ENCODE measurements at regions of chr10 and their contacts with region 1.

Region 1: DNA sequence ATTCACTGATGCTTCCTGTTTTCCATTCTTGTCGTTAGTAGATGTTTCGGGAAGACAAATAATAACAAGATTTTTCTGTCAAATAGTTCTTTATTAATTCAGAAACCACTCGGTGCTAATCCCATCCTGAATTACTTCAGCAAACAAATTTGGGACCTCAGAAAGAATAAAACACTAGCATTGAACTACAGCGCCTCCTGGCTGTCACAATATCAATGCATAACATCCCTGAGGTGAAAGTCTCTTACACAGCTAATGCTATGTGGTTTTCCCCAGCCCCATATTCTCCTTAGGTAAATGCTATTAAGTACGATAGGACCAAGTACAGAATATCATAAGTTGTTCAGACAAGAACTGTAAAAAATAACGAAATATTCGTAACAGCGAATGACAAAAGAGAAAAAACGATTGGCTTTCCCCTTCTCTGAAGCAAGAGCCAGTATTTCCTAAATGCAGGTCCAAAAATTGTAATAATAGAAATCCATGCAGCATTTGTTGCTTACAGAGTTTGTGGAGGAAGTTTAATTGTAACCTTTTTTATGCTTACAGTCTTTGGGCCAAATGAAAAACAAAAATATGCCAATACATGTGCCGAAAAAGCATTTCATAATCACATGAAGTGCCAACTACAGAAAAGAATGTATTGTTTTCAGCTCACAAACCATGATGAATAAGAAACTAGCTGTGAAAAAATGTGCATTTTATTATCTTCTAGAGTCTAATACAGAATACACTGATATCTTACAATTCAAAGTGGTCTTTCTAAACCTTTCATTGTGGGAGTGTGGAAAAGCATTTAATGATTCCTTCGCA is 47.3 kb downstream of the MYPN start:
- DNase-seq: no peak
- ATAC-seq: peak; percentile 35

Region 2: GRCh38 chr10:67861750-67862460 is 294.7 kb before region 1 on chr10:
- intact Hi-C with region 1: loop called (anchors 2 kb)
- DNase-seq: no peak
- ATAC-seq: no peak

Region 3: DNA sequence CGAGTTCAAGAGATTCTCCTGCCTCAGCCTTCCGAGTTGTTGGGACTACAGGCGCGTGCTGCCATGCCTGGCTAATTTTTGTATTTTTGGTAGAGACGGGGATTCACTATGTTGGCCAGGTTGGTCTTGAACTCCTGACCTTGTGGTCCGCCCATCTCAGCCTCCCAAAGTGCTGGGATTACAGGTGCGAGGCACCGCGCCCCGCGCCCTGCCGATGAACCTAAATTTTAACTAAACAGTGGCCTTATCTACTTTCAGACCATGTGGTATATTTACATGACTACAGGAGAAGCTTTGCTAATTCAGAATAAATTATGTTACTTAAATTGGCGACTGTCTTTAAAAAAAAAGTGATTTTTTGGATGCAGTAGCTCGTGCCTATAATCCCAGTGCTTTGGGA is 262.9 kb before region 1 on chr10:
- intact Hi-C with region 1: no loop called
- DNase-seq: no peak
- ATAC-seq: no peak

Region 4: GRCh38 chr10:68082872-68083271 is 73.7 kb before region 1 on chr10:
- intact Hi-C with region 1: loop called (anchors 5 kb)
- DNase-seq: no peak
- ATAC-seq: peak; percentile 67

Region 5: GRCh38 chr10:68121852-68122251 is 34.7 kb before region 1 on chr10:
- intact Hi-C with region 1: no loop called
- DNase-seq: no peak
- ATAC-seq: peak; percentile 48

Region 6: DNA sequence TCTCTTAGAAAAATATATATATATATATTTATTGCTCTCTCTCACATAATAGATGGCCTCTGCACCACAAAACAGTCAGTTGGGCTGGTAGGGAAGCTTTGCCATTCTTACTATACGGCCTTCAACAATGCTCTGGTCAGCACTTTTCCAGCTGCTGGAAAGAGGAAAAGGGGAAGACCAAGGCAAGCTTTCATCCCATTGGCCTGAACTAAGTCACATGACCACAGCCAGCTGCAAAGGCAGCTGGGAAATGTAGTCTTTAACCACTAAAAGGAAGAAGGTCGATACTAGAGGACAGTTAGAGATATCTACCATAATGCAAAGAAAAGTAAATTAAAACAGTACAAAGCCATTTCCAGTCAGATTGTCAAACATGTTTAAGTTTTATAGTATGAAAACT is 1837.7 kb after region 1 on chr10:
- intact Hi-C with region 1: no loop called
- DNase-seq: no peak
- ATAC-seq: peak; percentile 72

Measured in Right ventricle myocardium superior (tissue), 1 donor.